Calu3 (cell line): ENCODE measurements at regions of chr5 and their contacts with region 1.

Region 1: GRCh38 chr5:19795218-19795617 is 192.8 kb downstream of the CDH18 start:
- DNase-seq: no peak
- H3K4me3 Mint-ChIP-seq: no peak overlapping the region
- H3K27ac Mint-ChIP-seq: no peak overlapping the region
- H3K4me1 Mint-ChIP-seq: peaks cover 8% of the 10 kb centered on the region
- H3K27me3 Mint-ChIP-seq: no peaks in the 10 kb centered on the region
- CTCF ChIP-seq: no peak

Region 2: DNA sequence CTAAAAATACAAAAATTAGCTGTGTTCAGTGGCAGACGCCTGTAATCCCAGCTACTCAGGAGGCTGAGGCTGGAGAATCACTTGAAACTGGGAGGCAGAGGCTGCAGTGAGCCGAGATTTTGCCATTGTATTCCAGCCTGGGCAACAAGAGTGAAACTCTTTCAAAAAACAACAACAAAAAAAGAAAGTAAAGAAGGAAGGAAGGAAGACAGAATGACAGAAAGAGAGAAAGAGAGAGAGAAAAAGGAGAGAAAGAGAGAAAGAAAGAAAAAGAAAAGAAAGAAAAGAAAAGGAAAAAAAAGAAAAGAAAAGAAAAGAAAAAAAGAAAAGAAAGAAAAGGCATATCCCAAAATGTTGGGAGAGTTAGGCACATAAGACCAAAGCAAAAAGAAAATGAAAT is 85.8 kb before region 1 on chr5:
- CTCF ChIA-PET with region 1: no interaction called
- intact Hi-C with region 1: no loop called
- DNase-seq: no peak
- H3K4me3 Mint-ChIP-seq: no peak overlapping the region
- H3K27ac Mint-ChIP-seq: no peak overlapping the region
- H3K4me1 Mint-ChIP-seq: no peaks in the 10 kb centered on the region
- H3K27me3 Mint-ChIP-seq: no peaks in the 10 kb centered on the region
- CTCF ChIP-seq: no peak

Region 3: DNA sequence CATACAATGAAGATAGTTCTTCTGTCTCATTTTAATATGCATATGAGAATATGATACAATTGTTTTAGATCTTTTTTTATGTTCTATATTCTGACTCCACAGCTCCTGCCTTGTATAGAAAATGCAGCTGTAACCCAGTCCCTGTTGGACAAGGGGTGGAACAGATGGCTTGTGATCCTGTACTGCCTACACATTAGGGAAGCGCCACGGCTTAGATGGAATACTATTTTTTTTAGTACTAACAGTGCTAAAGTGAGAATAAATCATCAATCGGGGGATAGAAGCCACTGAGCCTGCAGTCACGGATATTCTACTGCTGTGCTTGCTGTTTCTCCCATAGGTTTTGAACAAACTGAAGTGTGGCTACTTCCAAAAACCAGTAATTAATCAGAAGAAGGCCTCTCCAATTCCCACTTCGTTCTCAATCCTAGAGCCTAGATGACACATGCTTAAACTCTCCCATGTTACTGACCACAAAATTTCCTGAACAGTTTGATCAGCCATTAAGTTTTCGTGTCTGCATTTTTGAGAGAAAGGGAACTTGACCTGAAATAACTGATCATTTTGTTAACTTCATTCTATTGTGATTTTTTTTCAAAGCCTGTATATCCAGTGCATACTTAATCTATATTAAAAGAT is 42.4 kb after region 1 on chr5:
- CTCF ChIA-PET with region 1: no interaction called
- intact Hi-C with region 1: no loop called
- DNase-seq: no peak
- H3K4me3 Mint-ChIP-seq: no peak overlapping the region
- H3K27ac Mint-ChIP-seq: no peak overlapping the region
- H3K4me1 Mint-ChIP-seq: no peaks in the 10 kb centered on the region
- H3K27me3 Mint-ChIP-seq: no peaks in the 10 kb centered on the region
- CTCF ChIP-seq: no peak

Region 4: DNA sequence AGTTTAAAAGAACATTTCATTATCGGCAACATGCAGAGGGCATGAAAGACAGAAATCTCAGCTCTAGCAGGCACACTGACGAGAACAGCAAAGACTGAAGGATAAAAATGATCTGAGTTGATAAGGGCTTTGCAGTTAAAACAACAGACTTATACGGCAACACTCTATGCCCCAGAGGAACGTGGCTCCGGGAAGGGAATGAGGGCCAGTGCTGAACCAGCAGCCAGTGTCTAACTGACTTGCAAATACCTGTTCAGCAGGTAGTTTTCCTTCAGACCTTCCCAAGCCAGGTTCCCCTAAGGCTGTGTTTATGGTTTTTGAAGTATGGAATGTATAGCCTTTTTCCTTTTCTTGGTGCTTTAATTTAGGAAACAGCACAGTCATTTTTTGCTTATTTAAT is 314.1 kb after region 1 on chr5:
- CTCF ChIA-PET with region 1: no interaction called
- intact Hi-C with region 1: no loop called
- DNase-seq: no peak
- H3K4me3 Mint-ChIP-seq: no peak overlapping the region
- H3K27ac Mint-ChIP-seq: no peak overlapping the region
- H3K4me1 Mint-ChIP-seq: no peaks in the 10 kb centered on the region
- H3K27me3 Mint-ChIP-seq: no peaks in the 10 kb centered on the region
- CTCF ChIP-seq: no peak

Region 5: DNA sequence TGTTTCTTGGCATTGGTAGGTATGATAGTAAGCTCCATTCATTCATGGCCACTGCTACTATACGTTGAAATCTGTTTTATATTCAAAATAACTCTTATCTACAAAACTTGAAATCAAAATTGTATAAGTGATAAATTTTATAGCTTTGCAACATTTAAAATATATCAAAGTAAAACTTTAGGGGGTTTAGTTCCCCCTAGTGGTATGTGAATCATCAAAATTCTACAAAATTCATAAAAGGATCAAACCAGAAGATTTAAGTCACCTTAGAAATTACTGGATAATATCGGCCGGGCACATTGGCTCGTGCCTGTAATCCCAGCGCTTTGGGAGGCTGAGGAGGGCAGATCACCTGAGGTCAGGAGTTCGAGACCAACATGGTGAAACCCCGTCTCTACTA is 435.8 kb after region 1 on chr5:
- CTCF ChIA-PET with region 1: no interaction called
- intact Hi-C with region 1: loop called (anchors 10 kb)
- DNase-seq: no peak
- H3K4me3 Mint-ChIP-seq: no peak overlapping the region
- H3K27ac Mint-ChIP-seq: no peak overlapping the region
- H3K4me1 Mint-ChIP-seq: no peaks in the 10 kb centered on the region
- H3K27me3 Mint-ChIP-seq: no peaks in the 10 kb centered on the region
- CTCF ChIP-seq: no peak